ENCODE measurements at regions of chr19 and their contacts with region 1.

Region 1: DNA sequence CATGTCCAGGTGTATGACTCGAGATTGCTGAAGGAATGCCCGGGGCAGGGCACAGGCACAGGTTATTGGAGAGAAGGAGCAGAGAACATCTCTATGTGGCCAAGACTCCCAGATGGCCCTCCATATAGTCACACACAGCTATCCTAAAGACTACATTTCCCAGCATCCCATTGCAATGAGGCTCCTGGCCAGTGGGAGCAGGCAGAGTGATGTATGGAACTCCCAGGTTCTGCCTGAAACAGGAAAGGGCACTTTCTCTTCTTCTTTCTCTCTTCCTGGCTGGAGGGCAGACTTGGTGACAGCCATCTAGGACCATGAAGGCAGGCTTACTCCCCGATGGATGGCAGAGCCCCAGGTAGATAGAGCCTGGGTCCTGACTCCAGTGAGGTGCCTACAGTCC is 13.5 kb downstream of the PPP1R13L start:
- DNase-seq: no peak

Region 2: GRCh38 chr19:45293682-45294081 is 97.7 kb before region 1 on chr19:
- intact Hi-C with region 1: no loop called
- DNase-seq: no peak

Region 3: GRCh38 chr19:45364751-45365150 is 26.6 kb before region 1 on chr19:
- intact Hi-C with region 1: loop called in 1 of 2 experiments (anchors 1 kb)
- DNase-seq: no peak

Measured in posterior vena cava (tissue), 2 donors.